GM12878 (cell line): ENCODE measurements at regions of chr7 and their contacts with region 1.

Region 1: DNA sequence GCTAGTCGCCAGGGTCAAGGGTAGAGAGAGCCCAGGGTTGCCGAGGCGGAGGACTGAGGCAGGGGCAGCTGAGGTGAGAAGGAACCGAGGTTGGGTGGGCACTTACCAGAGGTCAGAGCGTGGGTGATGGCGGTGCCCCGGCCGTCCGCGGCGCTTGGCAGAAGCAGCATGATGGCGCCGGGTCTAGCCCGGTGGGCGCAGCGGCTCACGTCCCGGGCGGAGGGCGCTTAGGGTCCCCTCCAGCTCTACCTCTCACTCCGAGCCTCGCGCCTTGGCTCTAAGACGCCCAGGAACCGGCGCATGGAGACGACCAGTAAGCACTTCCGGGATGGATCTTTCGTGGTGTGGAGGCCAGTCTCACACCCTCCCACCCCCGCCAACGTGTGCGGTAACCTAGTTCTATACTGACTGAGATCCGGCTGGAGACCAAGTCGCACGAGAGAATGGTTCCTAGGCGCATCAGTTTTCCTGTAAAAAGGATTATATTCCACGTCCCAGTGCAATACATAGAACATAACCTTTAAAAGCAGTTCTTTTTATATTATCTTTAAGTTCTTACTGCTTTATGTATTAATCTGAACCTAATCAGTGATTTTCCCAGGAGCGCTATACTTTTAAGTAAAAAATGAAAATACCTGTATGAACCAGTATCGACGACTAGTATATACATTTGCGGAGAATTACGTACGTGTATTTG is at the start of gene DNAJC2:
- DNase-seq: peak; percentile 69
- ATAC-seq: peak; percentile 88
- H3K4me3 ChIP-seq: peak within 1 kb of the TSS; percentile 83
- H3K27ac ChIP-seq: peak within 1 kb of the TSS; percentile 87
- H3K4me1 ChIP-seq: peaks cover 7% of the 10 kb centered on the region
- H3K27me3 ChIP-seq: no peaks in the 10 kb centered on the region
- CTCF ChIP-seq: no peak
- EP300 ChIP-seq: no peak
- POLR2A ChIP-seq: peak; percentile 94
- RAD21 ChIP-seq: no peak
- polyA plus RNA-seq, gene DNAJC2: 18.2 to 26.8 TPM

Region 2: DNA sequence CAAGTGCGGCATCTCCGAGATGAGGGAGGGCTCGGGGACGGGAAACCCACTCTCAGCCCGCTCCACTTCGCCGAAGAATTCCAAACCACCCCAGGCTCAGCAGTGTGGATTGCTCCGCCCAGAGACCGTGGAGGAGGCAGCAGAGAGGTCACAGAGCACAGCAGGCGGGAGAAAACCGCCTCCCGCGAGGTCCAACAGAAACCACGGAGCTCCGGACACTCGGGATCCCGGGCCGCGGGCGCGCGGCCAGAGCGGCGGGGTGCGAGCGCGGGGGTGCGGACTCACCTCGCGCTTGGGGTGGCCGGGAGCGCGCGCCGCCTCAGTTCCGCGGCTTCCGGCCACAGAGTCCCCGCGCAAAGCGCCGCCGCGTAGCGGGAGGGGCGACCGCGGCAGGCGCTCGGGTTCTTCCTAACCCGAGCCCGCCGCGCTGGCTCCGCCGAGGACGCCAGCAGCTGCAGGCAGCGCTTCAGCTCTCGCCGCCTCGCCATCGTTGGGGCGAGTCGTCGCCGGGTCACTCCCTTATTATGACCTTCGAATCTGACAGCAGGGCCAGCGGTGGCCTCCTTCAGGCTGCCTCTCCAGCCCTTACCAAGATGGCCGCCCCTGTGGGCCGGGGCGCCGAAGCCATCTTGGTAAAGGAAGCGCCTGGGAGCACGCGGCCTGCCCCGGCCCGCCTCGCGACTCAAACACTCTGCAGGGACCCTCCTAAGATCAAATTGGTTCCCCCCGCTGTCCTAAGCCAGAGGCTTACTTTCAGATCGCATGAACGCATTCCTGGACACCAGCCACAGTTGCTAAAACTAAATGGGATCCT is 195.4 kb before region 1 on chr7 and contains the start of gene NAPEPLD:
- CTCF ChIA-PET with region 1: no interaction called
- POLR2A ChIA-PET with region 1: no interaction called
- RAD21 ChIA-PET with region 1: no interaction called
- SMC1A ChIA-PET with region 1: no interaction called
- in situ Hi-C with region 1: no loop called
- intact Hi-C with region 1: loop called (anchors 10 kb)
- DNase-seq: peak; percentile 53
- ATAC-seq: peak; percentile 90
- H3K4me3 ChIP-seq: peak within 1 kb of the TSS; percentile 73
- H3K27ac ChIP-seq: peak within 1 kb of the TSS; percentile 98
- H3K4me1 ChIP-seq: peaks cover 3% of the 10 kb centered on the region; the same call in 1 of the 2 replicates
- H3K27me3 ChIP-seq: no peaks in the 10 kb centered on the region
- CTCF ChIP-seq: no peak
- EP300 ChIP-seq: no peak
- POLR2A ChIP-seq: peak; percentile 85
- RAD21 ChIP-seq: no peak
- polyA plus RNA-seq, gene NAPEPLD: 6.0 to 8.5 TPM

Region 3: GRCh38 chr7:103296901-103297836 is 47.4 kb before region 1 on chr7 and contains the start of gene PMPCB:
- CTCF ChIA-PET with region 1: interaction called, 4 read pairs
- POLR2A ChIA-PET with region 1: no interaction called
- RAD21 ChIA-PET with region 1: interaction called, 4 read pairs
- SMC1A ChIA-PET with region 1: interaction called, 7 read pairs
- in situ Hi-C with region 1: no loop called
- intact Hi-C with region 1: loop called (anchors 1 kb)
- DNase-seq: peak; percentile 72
- ATAC-seq: peak; percentile 93
- H3K4me3 ChIP-seq: peak within 1 kb of the TSS; percentile 71
- H3K27ac ChIP-seq: peak within 1 kb of the TSS; percentile 76
- H3K4me1 ChIP-seq: peaks cover 3% of the 10 kb centered on the region; the same call in 1 of the 2 replicates
- H3K27me3 ChIP-seq: no peaks in the 10 kb centered on the region
- CTCF ChIP-seq: peak; percentile 92 to 98 (median 95); a peak in 5 of 6 replicates
- EP300 ChIP-seq: no peak
- POLR2A ChIP-seq: peak; percentile 94
- RAD21 ChIP-seq: peak; percentile 79
- polyA plus RNA-seq, gene PMPCB: 150 to 163 TPM

Region 4: GRCh38 chr7:105098863-105099515 is 1754.4 kb after region 1 on chr7:
- CTCF ChIA-PET with region 1: no interaction called
- POLR2A ChIA-PET with region 1: no interaction called
- RAD21 ChIA-PET with region 1: no interaction called
- SMC1A ChIA-PET with region 1: no interaction called
- in situ Hi-C with region 1: loop called (anchors 25 kb)
- intact Hi-C with region 1: no loop called
- DNase-seq: no peak
- ATAC-seq: peak; percentile 81
- H3K4me3 ChIP-seq: no peak overlapping the region
- H3K27ac ChIP-seq: no peak overlapping the region
- H3K4me1 ChIP-seq: peaks cover 26% of the 10 kb centered on the region; the same call in 1 of the 2 replicates
- H3K27me3 ChIP-seq: no peaks in the 10 kb centered on the region
- CTCF ChIP-seq: no peak
- EP300 ChIP-seq: 0 out of 4 replicates have a peak, but pooled peaks of 1 of the 2 experiments have one; percentile 34
- POLR2A ChIP-seq: no peak
- RAD21 ChIP-seq: no peak